Caco-2 (cell line): ENCODE measurements at regions of chr5 and their contacts with region 1.

Region 1: GRCh38 chr5:139262742-139263445 is 30.6 kb upstream of the MATR3 start:
- DNase-seq: peak; percentile 88 to 90
- H3K4me3 ChIP-seq: no peak overlapping the region
- H3K4me3 Mint-ChIP-seq: no peak overlapping the region
- H3K27ac Mint-ChIP-seq: no peak overlapping the region
- H3K4me1 ChIP-seq: peaks cover 12% of the 10 kb centered on the region; the same call in 1 of the 2 replicates
- H3K4me1 Mint-ChIP-seq: peaks cover 15% of the 10 kb centered on the region
- H3K27me3 ChIP-seq: no peaks in the 10 kb centered on the region
- H3K27me3 Mint-ChIP-seq: no peaks in the 10 kb centered on the region
- CTCF ChIP-seq: peak; percentile 75 to 93

Region 2: DNA sequence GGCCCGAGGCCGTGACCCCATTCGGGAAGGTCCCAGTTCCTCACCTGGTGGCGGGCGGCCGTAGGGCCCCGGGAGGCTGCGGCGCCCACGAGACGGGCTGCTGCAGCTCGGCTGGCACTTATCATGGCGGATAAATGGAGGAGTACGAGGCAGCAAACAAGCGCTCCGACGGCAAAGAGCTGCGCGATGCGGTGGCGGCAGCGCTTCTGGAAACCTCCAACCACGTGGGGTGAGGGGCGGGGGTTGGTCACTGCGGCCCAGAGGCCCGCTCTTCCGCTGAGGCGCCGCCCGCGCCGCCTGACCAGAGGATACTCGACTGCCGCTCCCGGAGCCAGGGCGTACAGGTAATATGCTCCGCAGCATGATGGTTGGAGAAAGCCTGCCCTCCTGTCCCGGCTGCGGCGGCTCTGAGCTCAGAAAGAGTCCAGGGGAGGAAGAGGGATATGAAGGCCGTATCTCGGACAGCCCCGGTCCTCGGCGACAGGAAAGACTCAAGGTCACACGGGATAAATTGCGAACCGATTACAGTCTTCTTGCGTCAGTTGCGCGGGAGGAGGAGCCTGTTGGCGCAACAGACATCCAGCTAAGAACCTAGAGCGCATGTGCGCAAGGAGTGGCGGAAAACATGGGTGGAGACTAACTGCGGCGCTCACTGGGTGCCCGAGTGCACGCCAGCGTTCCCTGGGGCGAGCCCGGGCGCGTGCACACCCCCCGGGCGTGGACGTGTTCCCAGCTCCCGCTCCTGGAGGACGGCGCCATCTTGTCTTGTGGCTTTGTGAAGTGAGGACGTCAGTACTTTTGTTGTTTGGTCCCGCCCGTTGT is 687.5 kb before region 1 on chr5 and contains the start of gene HSPA9:
- CTCF ChIA-PET with region 1: interaction called, 5 read pairs
- POLR2A ChIA-PET with region 1: no interaction called
- intact Hi-C with region 1: loop called (anchors 1 kb)
- DNase-seq: peak; percentile 98 to 99
- H3K4me3 ChIP-seq: peak within 1 kb of the TSS; percentile 93
- H3K4me3 Mint-ChIP-seq: peak within 1 kb of the TSS; percentile 99
- H3K27ac Mint-ChIP-seq: peak within 1 kb of the TSS; percentile 99
- H3K4me1 ChIP-seq: peaks cover 11% of the 10 kb centered on the region
- H3K4me1 Mint-ChIP-seq: peaks cover 6% of the 10 kb centered on the region
- H3K27me3 ChIP-seq: no peaks in the 10 kb centered on the region
- H3K27me3 Mint-ChIP-seq: no peaks in the 10 kb centered on the region
- CTCF ChIP-seq: peak in 1 of 2 experiments; percentile 12
- total RNA-seq, gene HSPA9: 533 and 537 TPM in 2 replicates

Region 3: DNA sequence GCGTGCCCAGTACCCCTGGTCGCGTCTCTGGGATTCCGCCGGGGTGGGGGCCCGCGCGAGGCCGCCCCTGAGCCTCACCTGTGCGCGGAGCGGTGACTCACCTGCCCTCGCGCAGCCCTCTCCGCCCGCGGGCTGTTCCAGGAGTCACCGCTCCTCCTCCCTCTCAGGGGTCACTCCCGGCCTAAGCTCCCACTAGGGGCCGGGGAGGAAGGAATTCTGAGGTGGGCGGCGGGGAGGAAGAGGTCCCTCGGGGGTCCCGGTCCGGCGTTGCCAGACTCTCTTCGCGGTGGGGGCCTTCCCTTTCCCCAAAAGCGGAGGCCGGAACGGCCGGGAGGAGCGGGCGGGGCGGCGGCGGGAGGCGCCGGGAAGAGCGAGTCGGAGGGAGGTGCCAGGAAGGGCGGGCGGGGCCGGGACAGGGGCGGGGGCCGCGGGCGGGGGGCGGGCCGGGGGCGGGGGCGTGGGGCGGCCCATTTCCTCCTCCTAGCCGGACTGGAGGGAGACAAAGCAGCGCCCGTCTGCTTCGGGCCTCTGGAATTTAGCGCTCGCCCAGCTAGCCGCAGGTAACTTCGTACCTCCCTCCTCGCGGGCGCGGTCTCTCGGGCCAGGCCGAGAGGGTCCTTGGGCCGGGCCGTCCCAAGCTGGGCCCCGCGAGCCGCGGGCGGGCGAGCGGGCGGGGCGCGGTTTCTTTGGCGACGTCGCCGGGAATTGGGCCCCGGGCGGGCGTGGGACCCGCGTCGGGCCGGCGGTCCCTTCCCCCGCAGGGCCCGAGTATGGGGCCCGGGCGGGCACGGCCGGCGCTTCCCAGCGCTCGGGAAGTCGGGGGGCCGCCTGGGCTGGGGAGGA is 509.7 kb before region 1 on chr5 and contains the start of gene CTNNA1:
- CTCF ChIA-PET with region 1: no interaction called
- POLR2A ChIA-PET with region 1: no interaction called
- intact Hi-C with region 1: loop called (anchors 1 kb)
- DNase-seq: peak; percentile 91 to 94
- H3K4me3 ChIP-seq: peak within 1 kb of the TSS; percentile 86
- H3K4me3 Mint-ChIP-seq: peak within 1 kb of the TSS; percentile 93
- H3K27ac Mint-ChIP-seq: peak within 1 kb of the TSS; percentile 97
- H3K4me1 ChIP-seq: peaks cover 18% of the 10 kb centered on the region
- H3K4me1 Mint-ChIP-seq: peaks cover 52% of the 10 kb centered on the region
- H3K27me3 ChIP-seq: no peaks in the 10 kb centered on the region
- H3K27me3 Mint-ChIP-seq: no peaks in the 10 kb centered on the region
- CTCF ChIP-seq: no peak
- total RNA-seq, gene CTNNA1: 392 and 403 TPM in 2 replicates

Region 4: DNA sequence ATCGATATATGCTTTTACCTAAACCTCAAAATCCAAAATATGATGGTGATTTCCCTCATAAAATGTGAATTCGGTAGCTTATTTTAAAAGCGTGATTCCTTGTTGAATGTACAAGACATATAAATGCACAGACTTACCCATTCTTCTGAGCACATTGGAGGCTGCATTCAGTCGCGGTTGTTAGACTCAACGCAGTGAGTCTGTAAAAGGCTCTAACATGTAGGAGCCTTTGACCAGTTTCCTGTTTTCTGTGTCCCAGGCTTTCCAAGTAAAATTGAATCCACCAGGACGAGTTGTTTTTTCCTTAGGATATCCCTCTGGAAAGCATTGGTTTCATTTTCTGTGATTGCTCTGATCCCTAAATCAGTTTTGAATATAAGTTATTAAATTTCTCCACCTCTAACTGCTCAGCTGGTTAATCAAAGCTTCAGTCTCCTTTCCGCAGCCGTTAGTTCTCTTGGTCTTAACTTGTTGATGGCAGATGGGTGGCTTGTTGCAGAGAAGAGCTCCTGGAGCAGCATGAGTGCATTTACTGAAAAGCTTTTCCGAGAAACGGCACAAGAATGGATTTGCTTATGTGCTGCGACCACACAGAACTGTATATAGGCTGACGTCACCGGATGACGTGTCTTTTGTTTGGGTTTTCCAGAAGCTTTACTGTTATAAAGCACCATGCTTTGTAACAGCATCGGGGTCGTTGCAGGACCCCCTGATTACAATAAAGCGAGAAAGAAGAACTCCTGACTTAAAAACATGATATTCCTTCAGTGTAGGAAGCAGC is 387.9 kb before region 1 on chr5 and contains the start of gene LRRTM2:
- CTCF ChIA-PET with region 1: no interaction called
- POLR2A ChIA-PET with region 1: no interaction called
- intact Hi-C with region 1: loop called (anchors 1 kb)
- DNase-seq: no peak
- H3K4me3 ChIP-seq: no peak within 1 kb of the TSS
- H3K4me3 Mint-ChIP-seq: no peak within 1 kb of the TSS
- H3K27ac Mint-ChIP-seq: no peak within 1 kb of the TSS
- H3K4me1 ChIP-seq: peaks cover 22% of the 10 kb centered on the region
- H3K4me1 Mint-ChIP-seq: peaks cover 20% of the 10 kb centered on the region
- H3K27me3 ChIP-seq: no peaks in the 10 kb centered on the region
- H3K27me3 Mint-ChIP-seq: no peaks in the 10 kb centered on the region
- CTCF ChIP-seq: no peak
- total RNA-seq, gene LRRTM2: not detected in 2 replicates

Region 5: DNA sequence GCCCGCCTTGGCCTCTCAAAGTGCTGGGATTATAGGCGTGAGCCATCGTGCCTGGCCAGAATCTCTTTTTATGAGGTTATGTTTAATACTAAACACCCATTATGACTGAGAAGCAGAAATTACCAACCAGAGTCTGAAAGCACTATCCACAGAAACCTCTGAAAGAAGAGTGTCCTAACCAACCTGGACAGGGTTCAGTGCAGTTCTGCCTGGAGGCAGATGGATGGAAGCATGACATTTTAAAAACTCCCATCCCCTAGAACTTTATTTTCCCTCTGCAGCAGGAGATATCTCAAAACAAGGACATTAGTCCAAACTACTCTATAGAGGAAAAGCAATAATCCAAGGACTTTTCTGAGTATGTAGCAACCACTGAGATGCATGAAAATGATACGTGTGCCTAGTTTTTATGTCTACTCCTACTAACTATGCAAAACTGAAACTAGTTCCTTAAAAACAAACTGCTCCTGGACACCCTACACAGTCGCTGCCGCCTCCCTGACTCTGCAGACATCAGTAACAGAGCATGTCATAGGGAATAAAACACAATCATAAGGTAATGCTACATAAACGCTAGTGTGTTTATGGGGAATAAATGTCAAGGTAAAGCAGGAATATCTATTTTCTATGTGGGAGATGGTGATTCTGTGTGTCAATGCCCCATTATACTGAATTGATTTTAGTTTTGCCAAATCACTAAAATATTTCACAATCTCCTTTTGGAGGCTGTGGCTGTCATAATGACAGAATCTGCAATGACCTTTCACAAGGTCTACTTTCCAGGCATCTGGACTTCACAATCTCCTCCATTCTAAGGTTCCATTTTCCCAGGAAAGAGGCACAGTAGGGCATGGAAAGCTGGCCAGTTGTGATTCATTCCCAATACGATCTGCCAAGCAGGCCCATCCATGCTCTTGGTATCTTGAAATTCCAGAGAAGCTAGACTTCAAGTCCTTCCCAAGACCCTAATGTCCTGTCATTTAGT is 187.5 kb before region 1 on chr5:
- CTCF ChIA-PET with region 1: no interaction called
- POLR2A ChIA-PET with region 1: no interaction called
- intact Hi-C with region 1: loop called (anchors 5 kb)
- DNase-seq: no peak
- H3K4me3 ChIP-seq: no peak overlapping the region
- H3K4me3 Mint-ChIP-seq: no peak overlapping the region
- H3K27ac Mint-ChIP-seq: no peak overlapping the region
- H3K4me1 ChIP-seq: peaks cover 15% of the 10 kb centered on the region
- H3K4me1 Mint-ChIP-seq: peaks cover 11% of the 10 kb centered on the region
- H3K27me3 ChIP-seq: no peaks in the 10 kb centered on the region
- H3K27me3 Mint-ChIP-seq: no peaks in the 10 kb centered on the region
- CTCF ChIP-seq: no peak